Sigmoid colon (tissue), 7 donors: ENCODE measurements at regions of chr10 and their contacts with region 1.

Region 1: DNA sequence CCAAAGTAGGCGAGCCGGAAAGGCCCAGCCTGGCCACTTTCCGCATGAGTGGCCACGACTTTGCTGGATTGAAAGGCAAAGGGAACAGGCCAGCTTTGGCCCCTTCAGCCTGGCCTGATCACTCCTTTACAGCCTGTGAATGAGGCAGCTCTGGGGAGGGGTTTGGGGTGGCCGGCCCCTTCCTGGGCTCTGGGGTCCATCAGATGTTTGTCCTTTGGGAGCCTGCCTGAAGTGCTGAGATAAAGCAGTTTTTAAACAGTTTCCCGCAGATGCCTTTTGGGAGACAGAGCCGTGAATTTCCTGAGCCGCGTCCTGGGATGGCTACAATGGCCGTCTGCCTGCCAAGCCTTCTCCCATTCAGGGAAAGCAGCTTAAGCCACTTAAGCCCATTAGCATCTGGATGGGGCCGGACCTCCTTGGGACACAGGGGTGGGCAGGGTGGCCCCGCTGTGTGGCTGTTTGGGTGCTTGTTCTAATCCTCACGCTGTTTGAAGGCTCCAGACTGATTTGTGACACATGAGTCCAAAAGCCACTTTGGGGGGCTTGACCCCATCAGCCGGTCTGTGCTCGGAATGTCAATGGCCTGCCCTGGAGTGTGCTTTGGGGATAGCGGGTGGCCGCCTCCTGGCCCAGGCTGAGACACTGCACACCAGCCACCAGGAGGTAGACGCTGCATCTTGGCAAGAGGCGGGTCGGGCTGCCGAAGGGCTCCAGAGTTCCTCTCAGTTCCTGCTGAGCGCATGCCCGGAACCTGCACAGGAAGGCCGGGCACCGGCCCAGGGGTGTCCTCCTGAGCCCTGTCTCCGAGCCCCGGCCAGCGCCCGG is 38.9 kb downstream of the NKX6-2 start:
- DNase-seq: no peak
- H3K4me3 ChIP-seq: no peak overlapping the region
- H3K27ac ChIP-seq: peak overlapping the region in 3 of 4 donors; percentile 8 to 60 (median 17)
- H3K4me1 ChIP-seq: peaks cover 0 to 23% (median 19%) of the 10 kb centered on the region in 4 donors
- H3K27me3 ChIP-seq: no peaks in the 10 kb centered on the region
- CTCF ChIP-seq: no peak
- EP300 ChIP-seq: no peak
- POLR2A ChIP-seq: no peak

Region 2: GRCh38 chr10:132654702-132655661 is 92.0 kb before region 1 on chr10:
- intact Hi-C with region 1: loop called (anchors 10 kb)
- DNase-seq: no peak
- H3K4me3 ChIP-seq: no peak overlapping the region
- H3K27ac ChIP-seq: no peak overlapping the region
- H3K4me1 ChIP-seq: peaks cover 0 to 8% (median 0%) of the 10 kb centered on the region in 4 donors
- H3K27me3 ChIP-seq: no peaks in the 10 kb centered on the region
- CTCF ChIP-seq: peak; percentile 65 to 92 (median 74)
- EP300 ChIP-seq: no peak
- POLR2A ChIP-seq: no peak

Region 3: DNA sequence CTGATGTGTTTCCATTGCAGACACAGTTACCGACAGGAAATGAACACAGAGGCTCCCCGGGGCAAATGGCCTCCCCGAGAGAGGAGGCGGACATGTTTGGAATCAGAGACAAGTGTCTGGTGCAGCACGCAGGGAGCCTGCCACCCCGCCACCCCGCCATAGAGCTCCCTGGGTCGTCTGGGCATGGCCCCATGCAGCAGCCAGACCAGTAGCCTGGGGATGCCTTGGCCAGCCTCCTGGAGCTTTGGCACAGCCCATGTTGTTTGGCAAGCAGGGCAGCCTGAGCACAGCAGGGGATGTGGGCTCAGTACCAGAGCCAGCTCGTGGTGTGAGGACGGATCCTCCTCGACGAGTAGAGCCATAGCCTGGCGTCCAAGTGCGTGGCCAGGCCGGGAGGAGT is 41.8 kb before region 1 on chr10:
- intact Hi-C with region 1: no loop called
- DNase-seq: peak; percentile 61
- H3K4me3 ChIP-seq: no peak overlapping the region
- H3K27ac ChIP-seq: no peak overlapping the region
- H3K4me1 ChIP-seq: peaks cover 0 to 16% (median 12%) of the 10 kb centered on the region in 4 donors
- H3K27me3 ChIP-seq: no peaks in the 10 kb centered on the region
- CTCF ChIP-seq: no peak
- EP300 ChIP-seq: no peak
- POLR2A ChIP-seq: no peak